CD4-positive, alpha-beta memory T cell (primary cell): ENCODE measurements at regions of chr12 and their contacts with region 1.

Region 1: GRCh38 chr12:121688966-121689365 is 19.5 kb upstream of the MORN3 start:
- DNase-seq: no peak
- H3K4me3 ChIP-seq: no peak overlapping the region
- H3K4me3 Mint-ChIP-seq: no peak overlapping the region
- H3K27ac ChIP-seq: no peak overlapping the region
- H3K27ac Mint-ChIP-seq: peak overlapping the region in 5 of 7 donors; percentile 12 to 48 (median 37)
- H3K4me1 ChIP-seq: peaks cover 6% of the 10 kb centered on the region
- H3K4me1 Mint-ChIP-seq: peaks cover 6 to 13% (median 7%) of the 10 kb centered on the region in 4 donors
- H3K27me3 ChIP-seq: no peaks in the 10 kb centered on the region
- H3K27me3 Mint-ChIP-seq: no peaks in the 10 kb centered on the region

Region 2: GRCh38 chr12:121712461-121713256 is 23.7 kb after region 1 on chr12 and contains the start of gene TMEM120B:
- CTCF ChIA-PET with region 1: interaction called, 3 read pairs
- POLR2A ChIA-PET with region 1: interaction called, 5 read pairs
- intact Hi-C with region 1: loop called (anchors 1 kb)
- DNase-seq: peak; percentile 78 to 89 (median 84)
- H3K4me3 ChIP-seq: peak within 1 kb of the TSS; percentile 57 to 93
- H3K4me3 Mint-ChIP-seq: peak within 1 kb of the TSS; percentile 91 to 98 (median 96)
- H3K27ac ChIP-seq: peak within 1 kb of the TSS; percentile 63
- H3K27ac Mint-ChIP-seq: peak within 1 kb of the TSS; percentile 85 to 97 (median 95)
- H3K4me1 ChIP-seq: peaks cover 16% of the 10 kb centered on the region
- H3K4me1 Mint-ChIP-seq: peaks cover 7 to 26% (median 17%) of the 10 kb centered on the region in 4 donors
- H3K27me3 ChIP-seq: no peaks in the 10 kb centered on the region
- H3K27me3 Mint-ChIP-seq: no peaks in the 10 kb centered on the region
- total RNA-seq, gene TMEM120B: 11.3 to 12.8 TPM

Region 3: GRCh38 chr12:121765573-121765972 is 76.6 kb after region 1 on chr12:
- CTCF ChIA-PET with region 1: no interaction called
- POLR2A ChIA-PET with region 1: no interaction called
- intact Hi-C with region 1: no loop called
- DNase-seq: no peak
- H3K4me3 ChIP-seq: no peak overlapping the region
- H3K4me3 Mint-ChIP-seq: no peak overlapping the region
- H3K27ac ChIP-seq: no peak overlapping the region
- H3K27ac Mint-ChIP-seq: no peak overlapping the region
- H3K4me1 ChIP-seq: no peaks in the 10 kb centered on the region
- H3K4me1 Mint-ChIP-seq: no peaks in the 10 kb centered on the region
- H3K27me3 ChIP-seq: no peaks in the 10 kb centered on the region
- H3K27me3 Mint-ChIP-seq: no peaks in the 10 kb centered on the region

Region 4: DNA sequence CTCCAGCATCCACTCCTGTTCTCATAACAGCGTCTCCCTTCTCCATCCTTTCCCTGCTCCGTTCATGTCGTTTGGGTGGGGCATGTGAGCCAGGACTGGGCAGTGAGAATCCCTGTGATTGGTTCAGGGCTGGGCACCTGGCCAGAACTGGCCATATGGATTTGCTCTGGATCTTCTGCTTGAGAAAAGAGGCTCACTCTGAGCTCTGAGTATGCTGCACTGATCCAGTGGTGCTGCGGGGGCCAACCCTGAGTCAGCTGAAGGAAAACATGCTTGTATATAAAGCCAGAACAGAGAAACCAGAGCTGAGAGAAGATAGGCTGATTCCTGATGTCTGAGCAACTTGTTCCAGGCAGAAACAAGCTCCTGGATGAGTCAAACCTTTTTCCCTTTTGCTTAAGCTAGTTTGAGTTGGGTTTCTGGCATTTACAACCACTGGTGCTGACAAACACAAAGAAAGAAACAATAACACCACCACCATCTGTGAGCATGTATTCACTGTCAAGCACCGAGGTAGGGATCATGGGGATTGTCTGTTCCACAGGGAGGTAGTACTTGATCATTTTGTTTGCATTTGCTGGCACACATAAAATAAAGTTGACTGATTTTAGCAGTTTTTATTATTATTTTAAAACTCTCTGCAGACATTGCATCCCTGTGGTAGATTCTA is 183.7 kb after region 1 on chr12:
- CTCF ChIA-PET with region 1: no interaction called
- POLR2A ChIA-PET with region 1: no interaction called
- intact Hi-C with region 1: no loop called
- DNase-seq: no peak
- H3K4me3 ChIP-seq: no peak overlapping the region
- H3K4me3 Mint-ChIP-seq: no peak overlapping the region
- H3K27ac ChIP-seq: no peak overlapping the region
- H3K27ac Mint-ChIP-seq: peak overlapping the region in 1 of 7 donors; percentile 66
- H3K4me1 ChIP-seq: no peaks in the 10 kb centered on the region
- H3K4me1 Mint-ChIP-seq: no peaks in the 10 kb centered on the region
- H3K27me3 ChIP-seq: no peaks in the 10 kb centered on the region
- H3K27me3 Mint-ChIP-seq: no peaks in the 10 kb centered on the region